Posterior cingulate gyrus (tissue), 11 donors: ENCODE measurements at regions of chr4 and their contacts with region 1.

Region 1: DNA sequence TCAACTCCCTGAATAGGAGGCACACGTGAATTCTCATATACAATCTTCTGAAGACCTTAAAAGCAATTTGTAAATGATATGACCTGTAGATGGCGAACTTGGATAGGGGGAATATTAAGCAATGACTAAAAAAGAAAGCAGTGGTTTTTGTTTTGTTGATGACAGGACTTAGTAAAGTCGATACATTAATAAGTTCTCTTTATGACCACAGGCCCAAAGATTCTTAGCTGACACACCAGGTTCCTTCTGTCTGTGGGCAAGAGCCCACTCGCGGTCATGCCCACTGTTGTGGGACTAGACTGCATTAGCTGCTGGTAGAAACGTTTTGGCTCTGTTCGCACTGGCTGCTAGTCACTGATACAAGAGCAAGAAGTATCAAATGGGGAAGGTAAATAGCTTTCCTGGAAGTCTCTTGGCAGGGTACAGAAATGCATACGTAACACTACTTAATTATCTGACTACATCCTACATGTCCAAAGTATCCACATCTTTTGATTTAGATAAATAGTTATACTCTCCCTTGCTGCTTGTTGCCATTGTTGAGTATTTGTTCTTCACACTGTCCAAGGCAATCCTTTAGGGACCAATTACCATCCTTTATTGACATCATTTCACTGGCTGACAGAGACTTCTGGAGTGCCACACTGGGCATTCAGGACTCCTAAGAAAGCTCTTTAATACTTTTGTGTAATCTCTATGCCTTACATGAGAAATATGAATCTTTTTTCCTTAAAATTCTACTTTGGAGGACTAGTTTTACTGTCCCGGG is 31.0 kb downstream of the ALPK1 start:
- DNase-seq: no peak

Region 2: DNA sequence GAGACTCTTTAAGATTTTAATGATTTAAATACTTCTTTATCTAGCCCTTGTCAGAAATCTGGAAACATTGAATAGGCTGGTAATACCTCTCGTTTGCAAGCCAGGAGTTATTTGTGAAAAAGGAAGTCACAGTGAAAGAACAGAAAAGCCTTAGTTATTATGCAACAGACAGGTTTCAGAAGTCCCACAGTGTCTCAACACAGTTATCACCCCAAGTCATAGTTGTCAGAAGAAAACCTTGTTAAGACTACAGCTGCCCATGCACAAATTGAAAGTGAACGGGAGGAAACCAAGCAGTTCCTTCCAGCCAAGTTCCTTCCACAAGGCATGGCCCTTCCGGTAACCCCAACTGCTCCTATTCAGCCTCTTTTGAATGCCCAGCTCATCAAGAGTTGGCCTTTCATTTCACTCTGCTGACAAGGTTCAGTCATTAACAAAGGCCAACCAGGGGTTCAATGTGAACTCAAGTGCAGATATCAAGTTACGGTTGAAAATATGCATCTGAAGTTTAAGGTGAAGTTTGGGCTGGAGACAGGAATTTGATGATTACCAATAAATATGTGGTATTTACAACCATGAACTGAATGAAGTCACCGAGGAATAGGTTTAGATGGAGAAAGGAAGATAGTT is 15.4 kb before region 1 on chr4:
- intact Hi-C with region 1: no loop called
- DNase-seq: peak in 1 of 10 donors; percentile 25

Region 3: GRCh38 chr4:112523764-112524505 is 195.8 kb after region 1 on chr4:
- intact Hi-C with region 1: loop called (anchors 5 kb)
- DNase-seq: peak in 5 of 10 donors; percentile 49 to 87 (median 73)

Region 4: DNA sequence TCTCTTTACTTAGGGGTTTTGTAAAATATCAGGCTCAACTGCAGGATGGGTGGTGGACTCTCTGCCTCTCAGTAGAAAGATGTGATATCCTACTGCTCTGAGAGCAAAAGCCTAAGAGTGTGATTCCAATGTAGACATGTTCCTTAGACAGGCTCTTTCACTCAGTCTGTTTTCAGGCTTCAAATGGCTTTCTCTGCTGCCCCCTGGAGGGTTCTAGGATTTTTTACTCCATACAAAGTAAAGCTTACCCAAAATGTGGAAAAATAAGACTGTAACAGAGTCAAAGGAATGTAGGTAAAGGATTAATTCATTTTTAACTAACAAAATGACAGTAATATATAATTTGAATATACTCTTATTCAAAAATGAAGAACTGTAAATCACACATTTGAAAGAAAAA is 276.4 kb after region 1 on chr4:
- intact Hi-C with region 1: loop called (anchors 2 kb)
- DNase-seq: peak in 4 of 10 donors; percentile 18 to 58 (median 50)